ENCODE measurements at regions of chr2 and their contacts with region 1.

Region 1: DNA sequence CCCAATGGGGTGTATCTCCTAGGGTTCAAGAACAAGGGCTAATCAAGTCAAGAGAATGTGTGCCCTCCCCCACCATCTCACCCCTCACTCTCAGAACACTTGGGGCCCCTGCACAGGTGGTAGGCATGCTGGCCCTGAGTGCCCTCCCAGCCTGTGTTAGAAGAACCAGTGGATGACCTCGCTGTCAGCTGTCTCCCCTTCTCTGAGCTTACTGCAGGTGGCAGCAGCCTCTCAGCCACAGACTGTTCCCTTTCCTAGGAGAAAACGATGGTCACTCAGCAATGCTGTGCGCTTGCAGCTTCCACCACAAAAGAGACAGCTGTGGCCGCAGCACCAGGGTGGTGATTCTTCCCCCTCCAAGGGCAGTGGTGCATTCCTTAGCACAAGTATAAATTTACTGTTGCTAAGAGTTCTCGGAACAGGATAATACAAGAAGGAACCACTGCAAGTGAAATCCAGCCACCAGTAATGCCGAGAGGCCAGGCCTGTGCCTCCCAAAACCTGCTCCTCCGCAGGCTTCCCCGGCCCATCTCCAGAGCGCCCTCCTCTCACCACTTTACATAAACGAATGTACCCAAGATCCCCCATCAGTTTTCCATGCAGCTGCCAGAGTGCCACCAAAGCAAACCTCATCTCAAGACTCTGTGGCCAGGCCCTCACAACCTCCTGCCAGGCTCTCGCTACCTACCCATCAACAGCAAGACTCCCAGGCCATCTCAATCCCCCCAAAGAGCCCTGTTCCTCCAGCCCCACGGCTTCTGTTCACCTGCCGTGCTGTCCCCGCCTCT is 935 bp upstream of the RAMP1 start:
- DNase-seq: peak; percentile 39
- H3K4me3 Mint-ChIP-seq: peak overlapping the region; percentile 86
- H3K27ac Mint-ChIP-seq: peak overlapping the region; percentile 60
- H3K4me1 Mint-ChIP-seq: peaks cover 21% of the 10 kb centered on the region
- H3K27me3 Mint-ChIP-seq: peaks cover 53% of the 10 kb centered on the region

Region 2: GRCh38 chr2:237898057-237898414 is 39.5 kb after region 1 on chr2:
- intact Hi-C with region 1: loop called (anchors 1 kb)
- DNase-seq: no peak
- H3K4me3 Mint-ChIP-seq: peak overlapping the region; percentile 48
- H3K27ac Mint-ChIP-seq: peak overlapping the region; percentile 96
- H3K4me1 Mint-ChIP-seq: peaks cover 65% of the 10 kb centered on the region
- H3K27me3 Mint-ChIP-seq: no peaks in the 10 kb centered on the region

Region 3: DNA sequence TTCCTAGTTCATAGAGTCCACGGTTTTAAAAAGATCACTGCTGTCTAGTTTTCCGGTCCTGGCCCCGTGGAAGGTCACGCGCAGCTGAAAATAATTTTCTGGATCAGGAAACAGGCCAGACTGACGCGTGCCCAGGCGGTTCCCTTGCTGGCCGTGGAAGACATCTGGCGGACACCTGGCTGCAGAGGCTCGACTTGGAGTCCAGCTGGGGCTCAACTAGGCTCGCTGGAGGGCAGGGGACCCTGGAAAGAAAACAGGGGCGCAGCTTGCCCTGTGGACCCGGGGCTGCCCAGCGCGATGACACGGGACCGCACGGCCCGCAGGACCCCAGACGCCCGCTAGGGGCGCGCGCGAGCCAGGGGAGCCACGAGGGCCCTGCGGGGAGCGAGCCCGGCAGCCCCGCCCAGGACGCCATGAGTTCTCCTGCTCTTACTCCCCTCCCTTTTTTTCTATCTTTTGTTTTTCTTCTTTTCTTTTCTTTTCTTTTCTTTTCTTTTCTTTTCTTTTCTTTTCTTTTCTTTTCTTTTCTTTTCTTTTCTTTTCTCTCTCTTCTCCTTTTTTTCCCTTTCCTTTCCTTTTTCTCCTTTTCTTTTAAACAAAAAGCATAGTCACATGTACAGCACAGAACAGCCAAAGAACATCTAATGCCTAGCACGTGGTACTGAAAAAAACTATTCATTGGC is 65.1 kb after region 1 on chr2:
- intact Hi-C with region 1: loop called (anchors 2 kb)
- DNase-seq: peak; percentile 74
- H3K4me3 Mint-ChIP-seq: peak overlapping the region; percentile 70
- H3K27ac Mint-ChIP-seq: peak overlapping the region; percentile 74
- H3K4me1 Mint-ChIP-seq: peaks cover 38% of the 10 kb centered on the region
- H3K27me3 Mint-ChIP-seq: peaks cover 4% of the 10 kb centered on the region

Region 4: GRCh38 chr2:238106686-238107524 is 248.4 kb after region 1 on chr2:
- intact Hi-C with region 1: loop called (anchors 5 kb)
- DNase-seq: no peak
- H3K4me3 Mint-ChIP-seq: no peak overlapping the region
- H3K27ac Mint-ChIP-seq: no peak overlapping the region
- H3K4me1 Mint-ChIP-seq: peaks cover 6% of the 10 kb centered on the region
- H3K27me3 Mint-ChIP-seq: no peaks in the 10 kb centered on the region

Region 5: DNA sequence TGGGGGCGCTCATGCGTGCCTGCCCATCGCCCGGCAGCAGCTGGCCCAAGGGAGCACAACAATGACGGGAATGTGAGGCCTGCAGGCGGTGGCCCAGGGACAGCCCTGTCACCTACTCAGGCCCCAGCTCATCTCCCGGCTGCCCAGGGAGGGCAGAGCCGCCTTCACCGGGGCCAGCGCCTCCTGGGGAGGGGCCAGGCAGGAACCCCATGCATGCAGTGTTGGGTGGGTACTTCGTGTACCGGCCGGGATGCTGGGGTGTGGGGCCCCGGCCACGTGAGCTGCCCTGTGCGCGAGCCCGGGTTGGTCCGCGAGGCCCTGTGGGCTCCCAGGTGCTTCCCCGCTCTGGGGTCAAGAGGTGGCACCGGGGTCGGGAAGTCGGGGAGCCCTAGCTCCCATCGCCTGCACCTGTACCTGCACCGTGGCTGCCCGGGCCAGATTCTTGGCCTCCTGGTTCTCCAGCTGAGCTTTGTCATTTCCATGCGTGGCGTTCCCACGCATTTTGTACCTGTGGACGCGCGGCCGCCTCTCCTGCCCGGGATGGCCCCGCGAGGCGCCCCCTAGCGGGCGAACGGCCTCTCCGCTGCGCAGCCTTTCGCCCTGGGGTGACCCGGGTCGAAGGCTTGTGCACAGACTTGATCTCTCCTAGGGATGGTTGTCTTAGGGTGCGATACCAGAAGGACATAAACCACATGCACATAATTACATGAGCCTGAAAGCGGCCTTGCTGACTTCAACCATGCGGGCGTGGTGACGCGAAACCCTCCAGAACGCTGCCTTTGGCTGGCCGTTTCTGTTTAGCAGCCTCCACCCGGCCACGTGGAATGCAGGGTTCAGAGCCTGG is 280.9 kb after region 1 on chr2:
- intact Hi-C with region 1: loop called (anchors 5 kb)
- DNase-seq: no peak
- H3K4me3 Mint-ChIP-seq: no peak overlapping the region
- H3K27ac Mint-ChIP-seq: no peak overlapping the region
- H3K4me1 Mint-ChIP-seq: peaks cover 6% of the 10 kb centered on the region
- H3K27me3 Mint-ChIP-seq: peaks cover 2% of the 10 kb centered on the region

Region 6: GRCh38 chr2:238263204-238264071 is 404.9 kb after region 1 on chr2:
- intact Hi-C with region 1: loop called (anchors 1 kb)
- DNase-seq: peak; percentile 67
- H3K4me3 Mint-ChIP-seq: no peak overlapping the region
- H3K27ac Mint-ChIP-seq: peak overlapping the region; percentile 43
- H3K4me1 Mint-ChIP-seq: peaks cover 7% of the 10 kb centered on the region
- H3K27me3 Mint-ChIP-seq: no peaks in the 10 kb centered on the region

Measured in activated T-helper 1 cell treated with anti-CD3 and anti-CD28 coated beads, Interleukin-12 subunit alpha, Interleukin-12 subunit beta, Interleukin-2, Interleukin-4 antibody, amounts not matched to agents 30 ng/mL and 10 ng/mL and 1 ng/mL, durations not matched to agents 14 hours and 24 hours and 36 hours (primary cell).